ENCODE measurements at regions of chr1 and their contacts with region 1.

Region 1: DNA sequence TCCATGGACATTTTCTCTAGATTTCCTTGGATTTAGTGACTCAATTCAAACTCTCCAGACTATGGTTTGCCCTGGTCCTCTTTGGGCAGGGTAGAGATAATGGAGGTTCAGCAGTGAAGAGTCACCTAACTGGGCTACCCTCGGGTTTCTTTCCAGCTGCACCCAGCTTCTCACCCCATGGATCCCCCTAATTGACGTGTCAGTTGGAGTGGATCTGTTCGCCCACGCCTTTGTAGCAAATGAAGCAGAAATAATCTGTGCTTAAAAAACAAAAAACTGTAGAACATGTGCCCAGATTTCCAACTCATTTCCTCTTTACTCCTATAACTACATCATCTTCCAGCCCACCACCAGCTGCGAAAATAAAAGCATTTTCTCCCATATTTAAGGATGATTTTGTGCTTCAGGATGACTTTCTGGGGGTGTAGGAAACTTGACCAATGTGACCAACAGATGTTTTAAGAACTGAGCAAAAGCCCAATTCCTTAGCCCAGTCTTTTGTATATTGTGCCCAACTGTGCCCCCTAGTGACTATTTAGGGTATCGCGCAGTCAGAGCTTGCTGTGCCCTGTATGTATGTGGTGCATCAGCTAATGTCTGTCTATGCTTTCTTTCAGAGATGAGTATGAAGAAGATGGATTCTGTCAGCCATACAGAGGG is 66.5 kb upstream of the UBE2U start:
- DNase-seq: peak; percentile 64 to 86 (median 70)
- ATAC-seq: peak; percentile 84 to 99 (median 94)
- H3K4me3 ChIP-seq: no peak overlapping the region
- H3K27ac ChIP-seq: no peak overlapping the region
- H3K4me1 ChIP-seq: no peaks in the 10 kb centered on the region
- H3K27me3 ChIP-seq: no peaks in the 10 kb centered on the region
- CTCF ChIP-seq: peak; percentile 78 to 85 (median 84)

Region 2: GRCh38 chr1:63773815-63774616 is 362.9 kb before region 1 on chr1 and contains the start of gene ROR1:
- intact Hi-C with region 1: loop called in 1 of 3 experiments (anchors 10 kb)
- DNase-seq: peak; percentile 88 to 97 (median 91)
- ATAC-seq: peak; percentile 95 to 98 (median 98)
- H3K4me3 ChIP-seq: peak within 1 kb of the TSS; percentile 70 to 90 (median 82)
- H3K27ac ChIP-seq: peak within 1 kb of the TSS; percentile 85 to 91 (median 87)
- H3K4me1 ChIP-seq: peaks cover 0 to 19% (median 6%) of the 10 kb centered on the region in 3 donors
- H3K27me3 ChIP-seq: no peaks in the 10 kb centered on the region
- CTCF ChIP-seq: peak; percentile 39 to 60 (median 41)
- total RNA-seq, gene ROR1: 5.7 to 18.5 (median 9.0) TPM

Region 3: DNA sequence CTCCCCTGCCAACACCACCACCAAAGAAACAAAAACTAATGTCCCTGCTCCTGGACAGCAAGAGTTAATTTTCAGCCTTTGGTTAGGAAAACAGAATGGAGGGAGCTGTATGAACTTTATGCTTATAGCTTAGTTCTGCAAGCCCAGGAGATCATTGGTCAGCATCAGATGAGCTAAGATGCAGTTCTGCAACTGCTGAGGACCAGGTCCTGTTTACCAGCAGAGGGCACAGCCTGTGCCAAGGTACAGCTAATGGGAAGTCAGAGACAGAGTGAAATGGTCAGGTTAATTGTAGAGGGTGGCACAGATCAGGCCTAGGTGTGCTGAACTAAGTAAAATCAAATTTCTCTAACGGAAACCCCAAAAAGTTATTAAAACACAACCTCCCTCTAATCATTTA is 201.7 kb before region 1 on chr1:
- intact Hi-C with region 1: loop called in 1 of 3 experiments (anchors 10 kb)
- DNase-seq: peak in 1 of 6 donors; percentile 46
- ATAC-seq: peak; percentile 67 to 91 (median 86)
- H3K4me3 ChIP-seq: no peak overlapping the region
- H3K27ac ChIP-seq: peak overlapping the region in 1 of 4 donors; percentile 6
- H3K4me1 ChIP-seq: peaks cover 0 to 15% (median 0%) of the 10 kb centered on the region in 3 donors
- H3K27me3 ChIP-seq: no peaks in the 10 kb centered on the region
- CTCF ChIP-seq: peak in 3 of 4 donors; percentile 11 to 30 (median 27)

Region 4: GRCh38 chr1:64223329-64224151 is 86.7 kb after region 1 on chr1:
- intact Hi-C with region 1: no loop called
- DNase-seq: no peak
- ATAC-seq: peak in 2 of 4 donors; percentile 15 to 34
- H3K4me3 ChIP-seq: no peak overlapping the region
- H3K27ac ChIP-seq: no peak overlapping the region
- H3K4me1 ChIP-seq: no peaks in the 10 kb centered on the region
- H3K27me3 ChIP-seq: no peaks in the 10 kb centered on the region
- CTCF ChIP-seq: no peak

Measured in pancreas (tissue), 10 donors.